SK-N-SH (cell line): ENCODE measurements at regions of chr14 and their contacts with region 1.

Region 1: GRCh38 chr14:103104654-103105452 is 10.3 kb downstream of the EXOC3L4 start:
- DNase-seq: peak; percentile 91
- H3K4me3 ChIP-seq: peak overlapping the region in 1 of 2 experiments; percentile 57; a peak in 1 of 4 replicates
- H3K27ac ChIP-seq: no peak overlapping the region
- H3K4me1 ChIP-seq: peaks cover 6 to 9% of the 10 kb centered on the region in 2 experiments; a peak in 3 of 4 replicates
- H3K27me3 ChIP-seq: peaks cover 25% of the 10 kb centered on the region
- CTCF ChIP-seq: peak; percentile 95
- EP300 ChIP-seq: no peak
- RAD21 ChIP-seq: peak; percentile 87

Region 2: GRCh38 chr14:103085106-103086091 is 19.5 kb before region 1 on chr14:
- CTCF ChIA-PET with region 1: interaction called, 69 read pairs
- POLR2A ChIA-PET with region 1: no interaction called
- DNase-seq: peak; percentile 37
- H3K4me3 ChIP-seq: no peak overlapping the region
- H3K27ac ChIP-seq: no peak overlapping the region
- H3K4me1 ChIP-seq: no peaks in the 10 kb centered on the region; a peak in 1 of 4 replicates
- H3K27me3 ChIP-seq: peaks cover 12% of the 10 kb centered on the region
- CTCF ChIP-seq: no peak
- EP300 ChIP-seq: no peak
- RAD21 ChIP-seq: no peak

Region 3: GRCh38 chr14:103151258-103151945 is 46.5 kb after region 1 on chr14:
- CTCF ChIA-PET with region 1: interaction called, 14 read pairs
- POLR2A ChIA-PET with region 1: no interaction called
- DNase-seq: peak; percentile 64
- H3K4me3 ChIP-seq: no peak overlapping the region
- H3K27ac ChIP-seq: no peak overlapping the region
- H3K4me1 ChIP-seq: peaks cover 0 to 11% of the 10 kb centered on the region in 2 experiments; a peak in 2 of 4 replicates
- H3K27me3 ChIP-seq: no peaks in the 10 kb centered on the region
- CTCF ChIP-seq: no peak
- EP300 ChIP-seq: peak in 1 of 2 experiments; percentile 24; a peak in 1 of 4 replicates
- RAD21 ChIP-seq: no peak

Region 4: GRCh38 chr14:103185051-103185992 is 80.5 kb after region 1 on chr14:
- CTCF ChIA-PET with region 1: interaction called, 140 read pairs
- POLR2A ChIA-PET with region 1: no interaction called
- DNase-seq: peak; percentile 65
- H3K4me3 ChIP-seq: no peak overlapping the region
- H3K27ac ChIP-seq: no peak overlapping the region
- H3K4me1 ChIP-seq: peaks cover 0 to 6% of the 10 kb centered on the region in 2 experiments; a peak in 1 of 4 replicates
- H3K27me3 ChIP-seq: no peaks in the 10 kb centered on the region
- CTCF ChIP-seq: peak; percentile 81
- EP300 ChIP-seq: no peak
- RAD21 ChIP-seq: peak; percentile 66

Region 5: GRCh38 chr14:103260620-103261124 is 155.8 kb after region 1 on chr14:
- CTCF ChIA-PET with region 1: interaction called, 13 read pairs
- POLR2A ChIA-PET with region 1: no interaction called
- DNase-seq: peak; percentile 57
- H3K4me3 ChIP-seq: peak overlapping the region; percentile 51 to 61
- H3K27ac ChIP-seq: peak overlapping the region; percentile 69 to 76
- H3K4me1 ChIP-seq: peaks cover 0 to 2% of the 10 kb centered on the region in 2 experiments; a peak in 1 of 4 replicates
- H3K27me3 ChIP-seq: no peaks in the 10 kb centered on the region
- CTCF ChIP-seq: no peak
- EP300 ChIP-seq: no peak
- RAD21 ChIP-seq: no peak

Region 6: DNA sequence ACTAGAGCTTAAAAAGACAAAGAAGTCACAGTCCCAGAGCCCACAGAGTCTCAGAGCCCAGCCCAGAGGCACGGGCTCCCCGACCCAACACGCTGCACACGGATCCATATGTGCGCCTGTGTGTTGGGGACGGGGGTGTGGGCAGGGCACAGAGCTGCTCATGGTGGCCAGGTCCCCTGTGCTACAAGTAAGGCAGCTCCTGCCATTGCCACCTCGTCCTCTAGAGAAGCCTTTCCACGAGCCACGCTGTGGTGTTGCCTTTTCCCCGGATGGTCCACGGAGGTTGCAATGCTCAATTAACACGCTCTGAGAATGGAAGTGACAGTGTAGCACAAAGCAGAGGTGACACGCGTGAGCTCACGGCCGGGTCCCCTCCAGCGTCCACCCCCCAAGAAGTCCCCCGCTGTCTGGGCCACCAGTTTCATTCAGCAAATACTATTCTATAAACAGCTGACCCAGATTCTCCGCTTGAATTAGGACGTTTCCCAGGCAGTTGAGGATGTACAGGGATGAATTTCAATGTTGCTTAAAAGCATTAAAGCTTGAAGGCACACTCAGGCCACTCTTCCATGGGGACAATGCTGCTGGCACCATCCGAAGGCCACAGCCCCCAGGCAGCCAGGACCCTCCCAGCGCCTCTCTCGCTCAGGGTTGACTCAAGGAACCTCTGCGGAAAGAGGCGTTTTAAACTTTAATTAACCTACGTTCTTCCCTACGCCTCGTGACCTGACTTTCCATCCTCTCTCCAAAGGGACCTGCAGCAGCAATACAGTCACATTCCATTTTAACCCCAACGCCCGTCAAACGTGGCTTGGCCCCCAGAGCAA is 206.5 kb after region 1 on chr14:
- CTCF ChIA-PET with region 1: interaction called, 15 read pairs
- POLR2A ChIA-PET with region 1: no interaction called
- DNase-seq: no peak
- H3K4me3 ChIP-seq: no peak overlapping the region
- H3K27ac ChIP-seq: no peak overlapping the region
- H3K4me1 ChIP-seq: no peaks in the 10 kb centered on the region
- H3K27me3 ChIP-seq: no peaks in the 10 kb centered on the region
- CTCF ChIP-seq: no peak
- EP300 ChIP-seq: no peak
- RAD21 ChIP-seq: no peak

Region 7: GRCh38 chr14:103730490-103731035 is 625.7 kb after region 1 on chr14:
- CTCF ChIA-PET with region 1: no interaction called
- POLR2A ChIA-PET with region 1: no interaction called
- DNase-seq: peak; percentile 58
- H3K4me3 ChIP-seq: no peak overlapping the region
- H3K27ac ChIP-seq: no peak overlapping the region
- H3K4me1 ChIP-seq: no peaks in the 10 kb centered on the region
- H3K27me3 ChIP-seq: no peaks in the 10 kb centered on the region
- CTCF ChIP-seq: 0 out of 2 replicates have a peak, but pooled peaks have one; percentile 22
- EP300 ChIP-seq: no peak
- RAD21 ChIP-seq: no peak